Right cardiac atrium (tissue), 5 donors: ENCODE measurements at regions of chr10 and their contacts with region 1.

Region 1: DNA sequence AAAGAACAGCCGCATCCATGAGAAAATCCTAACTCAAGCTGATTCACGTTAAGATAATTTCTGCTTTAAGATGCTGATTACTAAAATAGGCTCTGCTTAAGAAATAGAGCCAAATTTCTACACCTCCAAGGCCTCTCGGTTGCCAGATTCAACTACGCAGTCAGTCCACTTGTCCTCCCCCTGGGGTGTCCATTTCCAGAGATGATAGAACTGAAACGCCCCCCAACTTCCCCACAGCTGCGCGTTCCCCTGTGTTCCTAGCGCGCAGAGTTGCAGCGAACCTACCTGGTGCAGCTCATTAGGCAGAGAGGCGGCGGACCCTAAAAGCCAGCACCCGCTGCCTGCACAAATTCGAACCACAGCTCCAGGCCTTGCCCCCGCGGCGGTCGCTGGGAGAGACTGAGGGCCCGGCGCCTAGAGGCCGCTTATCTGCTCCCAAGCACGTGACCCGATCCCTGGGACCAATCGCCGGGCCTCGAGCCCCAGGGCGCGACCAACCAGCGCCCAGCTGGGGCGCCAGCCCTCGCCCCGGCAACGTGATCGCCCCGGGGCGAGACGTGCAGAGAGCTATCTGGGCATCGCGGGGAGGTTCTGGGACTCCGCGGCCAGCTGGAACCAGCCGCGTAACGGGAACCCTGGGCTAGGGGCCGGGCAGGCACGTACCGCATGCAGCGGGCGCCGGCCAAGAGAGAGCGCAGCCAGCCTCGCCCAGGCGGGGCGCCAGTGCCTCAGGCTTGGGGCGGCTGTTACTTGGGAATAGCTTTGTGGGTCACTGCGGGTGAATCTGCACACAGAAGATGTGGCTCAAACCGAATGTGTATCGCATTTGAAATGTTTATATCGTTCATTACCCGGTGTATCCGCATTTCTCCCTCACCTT is at the start of gene PPP1R3C:
- DNase-seq: peak; percentile 95 to 97 (median 97)
- ATAC-seq: peak; percentile 97 to 98
- H3K4me3 ChIP-seq: peak within 1 kb of the TSS; percentile 70
- H3K27ac ChIP-seq: peak within 1 kb of the TSS; percentile 81
- H3K4me1 ChIP-seq: no peaks in the 10 kb centered on the region
- H3K27me3 ChIP-seq: no peaks in the 10 kb centered on the region
- total RNA-seq, gene PPP1R3C: 162 to 222 (median 203) TPM

Region 2: DNA sequence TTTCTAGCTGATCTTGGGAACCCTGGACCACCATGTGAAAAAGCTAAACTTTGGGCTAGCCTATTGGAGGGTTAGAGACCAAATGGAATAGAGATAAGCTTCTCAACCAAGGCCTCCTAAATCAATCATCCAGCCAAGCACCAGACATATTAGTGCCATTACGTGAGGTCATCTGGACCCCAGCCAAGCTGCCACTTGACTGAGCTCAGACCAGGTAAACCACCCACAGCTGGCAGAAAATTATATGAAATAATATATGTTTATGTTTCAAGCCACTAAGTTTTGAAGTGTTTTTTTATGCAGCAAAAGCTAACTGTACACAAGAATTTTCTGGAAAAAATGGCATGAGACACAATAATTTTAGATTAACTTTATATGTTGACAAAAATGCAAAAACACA is 495.1 kb before region 1 on chr10:
- intact Hi-C with region 1: no loop called
- DNase-seq: no peak
- ATAC-seq: no peak
- H3K4me3 ChIP-seq: no peak overlapping the region
- H3K27ac ChIP-seq: no peak overlapping the region
- H3K4me1 ChIP-seq: no peaks in the 10 kb centered on the region
- H3K27me3 ChIP-seq: no peaks in the 10 kb centered on the region

Region 3: DNA sequence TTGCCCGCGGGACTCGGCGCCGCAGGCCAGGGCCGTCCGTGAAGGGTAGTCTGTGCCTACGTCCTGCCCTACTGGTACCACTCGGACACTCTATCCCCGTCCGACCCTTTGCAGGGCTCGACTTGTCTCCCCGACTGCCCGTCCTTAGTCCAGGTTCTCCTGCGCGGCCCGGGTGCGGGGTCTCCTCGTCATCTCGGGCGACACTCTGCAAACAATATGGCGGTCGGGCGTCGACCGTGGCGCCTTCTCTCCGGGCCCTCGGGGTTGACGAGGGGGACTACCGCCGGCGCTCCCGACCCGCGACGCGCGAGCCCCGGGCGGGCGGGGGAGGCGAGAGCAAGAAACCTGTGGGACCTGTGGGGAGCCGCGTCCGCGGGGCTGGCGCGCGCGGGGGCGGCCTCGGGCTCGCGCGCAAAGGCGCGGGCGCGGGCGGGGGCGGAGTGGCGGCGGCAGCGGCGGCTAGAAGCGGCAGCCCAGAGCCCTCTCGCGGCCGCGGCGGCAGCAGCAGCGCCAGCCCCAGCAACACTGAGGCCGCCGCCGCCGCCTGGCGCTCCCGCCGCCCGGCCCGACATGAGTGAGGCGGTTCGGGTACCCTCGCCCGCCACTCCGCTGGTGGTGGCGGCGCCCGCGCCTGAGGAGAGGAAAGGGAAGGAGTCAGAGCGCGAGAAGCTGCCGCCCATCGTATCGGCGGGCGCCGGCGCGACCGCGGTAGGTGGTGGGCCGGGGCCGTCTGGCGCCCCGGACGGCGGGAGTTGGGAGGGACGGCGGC is 222.9 kb before region 1 on chr10 and contains the start of gene HECTD2:
- intact Hi-C with region 1: loop called in 1 of 4 experiments (anchors 10 kb)
- DNase-seq: peak; percentile 86 to 94 (median 93)
- ATAC-seq: peak; percentile 86 to 89
- H3K4me3 ChIP-seq: peak within 1 kb of the TSS; percentile 82
- H3K27ac ChIP-seq: peak within 1 kb of the TSS; percentile 96
- H3K4me1 ChIP-seq: peaks cover 2% of the 10 kb centered on the region
- H3K27me3 ChIP-seq: no peaks in the 10 kb centered on the region
- total RNA-seq, gene HECTD2: 8.9 to 13.4 (median 9.7) TPM

Region 4: DNA sequence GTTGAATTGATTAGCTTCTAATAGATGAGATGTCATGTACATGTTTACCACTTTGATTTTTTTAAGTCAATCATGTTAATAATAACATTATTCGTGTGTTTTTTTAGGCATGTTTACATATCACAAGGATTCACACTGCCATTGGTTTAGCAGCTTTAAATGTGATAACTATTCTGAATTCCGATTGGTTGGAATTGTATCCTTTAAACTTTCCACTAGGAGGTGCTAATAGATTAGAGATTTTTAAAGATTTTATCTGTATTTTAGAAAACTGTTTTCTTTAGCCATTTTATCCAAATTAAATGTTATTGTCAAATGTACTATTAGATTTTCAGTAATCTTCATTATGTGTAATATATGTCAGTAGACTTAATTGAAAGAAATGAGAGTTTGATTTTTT is 139.6 kb before region 1 on chr10:
- intact Hi-C with region 1: loop called (anchors 5 to 10 kb)
- DNase-seq: no peak
- ATAC-seq: no peak
- H3K4me3 ChIP-seq: no peak overlapping the region
- H3K27ac ChIP-seq: no peak overlapping the region
- H3K4me1 ChIP-seq: no peaks in the 10 kb centered on the region
- H3K27me3 ChIP-seq: no peaks in the 10 kb centered on the region

Region 5: DNA sequence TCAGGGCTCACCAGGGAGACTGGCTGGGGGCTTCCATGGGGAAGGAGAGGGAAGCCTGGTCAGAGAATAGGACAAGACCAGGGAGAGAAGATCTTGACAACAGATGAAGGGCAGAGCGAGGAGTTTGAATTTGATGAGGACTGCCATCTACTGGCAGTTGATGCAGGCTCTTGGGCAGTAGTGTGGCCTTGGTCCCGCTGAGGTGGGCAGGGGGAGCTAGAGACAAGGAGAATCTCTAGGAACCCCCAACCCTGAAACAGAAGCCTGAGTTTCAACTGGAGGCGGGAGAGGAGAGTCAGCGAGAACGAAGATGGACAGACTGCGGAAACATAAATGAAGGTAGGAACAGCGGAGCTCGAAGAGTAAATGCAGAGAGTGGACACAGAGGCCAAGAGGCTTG is 81.1 kb before region 1 on chr10:
- intact Hi-C with region 1: loop called in 3 of 4 experiments (anchors 2 to 5 kb)
- DNase-seq: peak; percentile 42 to 82 (median 67)
- ATAC-seq: peak; percentile 85 to 86
- H3K4me3 ChIP-seq: no peak overlapping the region
- H3K27ac ChIP-seq: peak overlapping the region; percentile 20
- H3K4me1 ChIP-seq: peaks cover 5% of the 10 kb centered on the region
- H3K27me3 ChIP-seq: no peaks in the 10 kb centered on the region

Region 6: GRCh38 chr10:91590142-91590903 is 42.6 kb before region 1 on chr10:
- intact Hi-C with region 1: loop called in 2 of 4 experiments (anchors 5 kb)
- DNase-seq: peak; percentile 79 to 90 (median 89)
- ATAC-seq: peak; percentile 62 to 72
- H3K4me3 ChIP-seq: no peak overlapping the region
- H3K27ac ChIP-seq: peak overlapping the region; percentile 96
- H3K4me1 ChIP-seq: peaks cover 24% of the 10 kb centered on the region
- H3K27me3 ChIP-seq: no peaks in the 10 kb centered on the region